Tibial artery (tissue), 4 donors: ENCODE measurements at regions of chr6 and their contacts with region 1.

Region 1: GRCh38 chr6:137313928-137314855 is 95.0 kb upstream of the IFNGR1 start:
- DNase-seq: peak; percentile 71 to 83
- H3K4me3 ChIP-seq: peak overlapping the region; percentile 9 to 35
- H3K27ac ChIP-seq: no peak overlapping the region
- H3K4me1 ChIP-seq: peaks cover 0 to 7% (median 3%) of the 10 kb centered on the region in 4 donors
- H3K27me3 ChIP-seq: no peaks in the 10 kb centered on the region
- CTCF ChIP-seq: peak; percentile 75 to 76

Region 2: DNA sequence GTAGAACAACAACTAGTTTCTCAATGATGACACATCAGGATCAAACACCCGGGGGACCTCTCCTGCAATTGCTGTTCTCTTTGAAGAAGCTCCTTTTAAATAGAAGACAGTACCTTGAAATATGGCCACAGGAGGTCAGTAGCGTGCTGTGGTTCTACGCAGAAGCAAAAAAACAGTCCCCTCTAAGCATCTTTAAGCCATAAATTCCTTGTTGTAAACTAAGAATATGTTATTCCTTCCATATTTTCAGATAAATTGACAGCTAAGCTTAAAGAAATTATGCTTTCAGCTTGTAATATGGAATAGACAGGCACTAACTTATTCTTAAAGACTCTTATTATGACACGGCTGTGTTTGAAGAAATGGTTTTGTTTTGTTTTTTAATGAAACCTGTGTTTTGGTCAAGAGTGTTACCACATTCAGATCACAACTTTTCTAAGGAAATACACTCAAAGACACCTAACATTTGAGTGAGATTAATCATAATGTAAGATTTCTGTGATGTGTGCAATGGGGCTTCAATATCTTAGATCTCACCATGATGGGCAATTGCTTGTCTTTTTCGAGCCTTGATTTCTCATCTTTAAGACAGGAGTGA is 219.7 kb before region 1 on chr6:
- intact Hi-C with region 1: loop called (anchors 10 kb)
- DNase-seq: peak in 1 of 2 donors; percentile 74
- H3K4me3 ChIP-seq: no peak overlapping the region
- H3K27ac ChIP-seq: no peak overlapping the region
- H3K4me1 ChIP-seq: no peaks in the 10 kb centered on the region
- H3K27me3 ChIP-seq: no peaks in the 10 kb centered on the region
- CTCF ChIP-seq: peak; percentile 58 to 61

Region 3: GRCh38 chr6:137799950-137800568 is 485.9 kb after region 1 on chr6:
- intact Hi-C with region 1: no loop called
- DNase-seq: peak in 1 of 2 donors; percentile 49
- H3K4me3 ChIP-seq: no peak overlapping the region
- H3K27ac ChIP-seq: no peak overlapping the region
- H3K4me1 ChIP-seq: no peaks in the 10 kb centered on the region
- H3K27me3 ChIP-seq: no peaks in the 10 kb centered on the region
- CTCF ChIP-seq: peak; percentile 45 to 46